ENCODE measurements at regions of chr19 and their contacts with region 1.

Region 1: DNA sequence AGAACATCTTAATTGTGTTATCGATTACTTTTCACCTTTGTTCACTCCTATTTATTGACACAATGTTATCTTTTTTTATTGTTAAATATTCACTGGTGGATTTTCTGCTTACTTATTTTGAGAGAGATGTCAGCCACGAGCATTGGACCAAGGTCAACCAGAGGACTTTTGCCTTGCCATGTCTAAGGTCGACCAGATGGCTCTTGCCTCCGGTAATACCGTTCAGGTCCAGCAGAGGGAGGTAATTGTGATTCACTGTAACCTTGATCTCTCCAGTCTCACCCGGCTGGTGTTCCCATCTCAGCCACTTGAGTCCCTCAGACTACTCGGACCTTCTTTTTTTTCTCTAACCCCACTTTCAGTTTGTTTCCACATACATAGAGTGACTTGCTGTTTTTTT is 1438.1 kb downstream of the UQCRFS1 start:
- DNase-seq: peak in 2 of 9 experiments; percentile 8 to 14
- ATAC-seq: no peak
- H3K4me3 ChIP-seq: no peak overlapping the region
- H3K4me3 Mint-ChIP-seq: no peak overlapping the region
- H3K27ac ChIP-seq: no peak overlapping the region
- H3K27ac Mint-ChIP-seq: no peak overlapping the region
- H3K4me1 ChIP-seq: no peaks in the 10 kb centered on the region
- H3K4me1 Mint-ChIP-seq: no peaks in the 10 kb centered on the region
- H3K27me3 ChIP-seq: no peaks in the 10 kb centered on the region
- H3K27me3 Mint-ChIP-seq: no peaks in the 10 kb centered on the region
- CTCF ChIP-seq: peak; percentile 15

Region 2: DNA sequence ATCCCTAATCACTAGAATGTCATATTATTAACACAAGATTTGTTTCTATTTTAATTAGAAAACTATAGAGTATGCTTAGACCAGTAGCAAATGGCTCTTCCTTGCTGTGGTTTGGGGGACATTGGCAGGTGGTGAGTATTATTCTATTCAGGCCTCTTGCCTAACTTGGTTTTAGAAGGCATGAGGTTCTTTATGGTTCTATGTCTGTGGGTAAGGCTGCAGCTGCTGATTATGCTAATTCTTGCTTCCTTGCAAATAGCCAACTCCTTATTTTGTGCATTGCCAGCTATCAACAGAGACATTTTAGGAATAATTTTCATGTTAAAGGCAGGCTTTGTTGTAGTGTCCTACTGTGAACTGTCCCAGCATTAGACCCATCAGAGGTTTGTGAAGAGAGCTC is 93.2 kb after region 1 on chr19:
- CTCF ChIA-PET with region 1: no interaction called
- POLR2A ChIA-PET with region 1: no interaction called
- intact Hi-C with region 1: loop called in 1 of 2 experiments (anchors 1 kb)
- DNase-seq: no peak
- ATAC-seq: no peak
- H3K4me3 ChIP-seq: no peak overlapping the region
- H3K4me3 Mint-ChIP-seq: no peak overlapping the region
- H3K27ac ChIP-seq: no peak overlapping the region
- H3K27ac Mint-ChIP-seq: no peak overlapping the region
- H3K4me1 ChIP-seq: no peaks in the 10 kb centered on the region
- H3K4me1 Mint-ChIP-seq: no peaks in the 10 kb centered on the region
- H3K27me3 ChIP-seq: no peaks in the 10 kb centered on the region
- H3K27me3 Mint-ChIP-seq: no peaks in the 10 kb centered on the region
- CTCF ChIP-seq: no peak

Measured in CD8-positive, alpha-beta T cell (primary cell).